Cardiac septum (tissue), 1 donor: ENCODE measurements at regions of chr1 and their contacts with region 1.

Region 1: DNA sequence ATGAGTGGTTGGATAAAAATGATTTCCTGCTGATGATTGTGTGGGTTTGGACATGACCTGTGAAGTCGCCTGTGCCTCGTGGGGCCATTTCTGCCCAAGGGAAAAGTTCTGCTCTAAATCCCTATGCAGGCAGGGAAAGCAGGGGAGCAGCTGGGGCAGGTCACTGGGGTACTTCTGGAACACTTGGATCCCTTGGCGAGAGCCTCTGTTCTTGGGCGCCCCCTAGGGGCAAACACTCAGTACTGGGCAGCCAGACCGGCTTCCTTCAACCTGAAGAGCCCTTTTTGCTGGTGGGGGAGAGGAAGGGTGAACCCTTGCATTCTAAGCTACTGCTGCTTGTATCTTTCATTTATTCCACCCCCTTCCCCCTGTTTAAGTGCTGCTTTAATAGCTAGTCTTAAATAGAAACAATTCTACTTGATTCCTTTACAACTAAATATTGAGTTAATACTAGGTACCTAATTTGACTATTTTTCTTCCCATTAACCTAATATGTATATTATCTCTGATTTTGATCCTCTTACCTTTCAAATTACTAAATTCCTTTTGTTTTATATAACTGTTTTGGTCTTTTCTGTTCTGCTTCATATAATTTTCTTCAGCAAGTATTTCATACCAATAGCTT is 5.1 kb upstream of the CLEC20A start:
- DNase-seq: peak; percentile 86

Region 2: DNA sequence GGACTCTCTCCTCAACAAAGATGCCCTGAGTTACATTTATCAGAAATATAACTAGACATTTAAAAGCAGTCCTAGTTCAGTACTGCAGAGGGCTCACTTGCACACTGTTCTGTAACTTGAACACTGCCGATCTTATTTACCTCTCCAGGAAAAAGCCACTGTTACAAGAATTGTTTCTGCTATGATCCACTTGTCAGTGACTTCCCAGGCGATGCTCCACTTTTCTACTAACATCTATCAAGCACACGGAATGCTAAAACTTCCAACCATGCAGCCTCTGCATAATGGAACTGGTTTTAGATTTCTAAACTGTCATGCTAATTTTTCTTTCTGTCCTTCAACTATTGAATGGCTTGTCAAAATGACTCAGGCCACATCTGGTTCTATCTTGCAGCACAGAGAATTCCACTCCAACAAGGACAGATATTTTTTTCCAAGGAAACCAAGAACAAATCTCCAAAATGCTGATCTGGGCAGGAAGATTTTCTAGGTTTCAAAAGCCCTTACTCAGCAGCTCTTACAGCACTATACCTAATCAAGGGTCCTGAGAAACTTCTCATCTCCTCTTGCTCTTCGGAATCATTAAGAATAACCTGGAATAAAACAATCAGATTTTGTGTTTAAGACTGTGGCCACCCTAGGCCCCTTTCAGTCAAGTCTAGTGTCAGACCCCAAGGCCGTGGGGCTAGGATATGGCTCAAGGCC is 541.9 kb before region 1 on chr1:
- intact Hi-C with region 1: loop called (anchors 5 kb)
- DNase-seq: no peak

Region 3: GRCh38 chr1:178310685-178311105 is 191.1 kb before region 1 on chr1:
- intact Hi-C with region 1: loop called (anchors 2 kb)
- DNase-seq: no peak

Region 4: DNA sequence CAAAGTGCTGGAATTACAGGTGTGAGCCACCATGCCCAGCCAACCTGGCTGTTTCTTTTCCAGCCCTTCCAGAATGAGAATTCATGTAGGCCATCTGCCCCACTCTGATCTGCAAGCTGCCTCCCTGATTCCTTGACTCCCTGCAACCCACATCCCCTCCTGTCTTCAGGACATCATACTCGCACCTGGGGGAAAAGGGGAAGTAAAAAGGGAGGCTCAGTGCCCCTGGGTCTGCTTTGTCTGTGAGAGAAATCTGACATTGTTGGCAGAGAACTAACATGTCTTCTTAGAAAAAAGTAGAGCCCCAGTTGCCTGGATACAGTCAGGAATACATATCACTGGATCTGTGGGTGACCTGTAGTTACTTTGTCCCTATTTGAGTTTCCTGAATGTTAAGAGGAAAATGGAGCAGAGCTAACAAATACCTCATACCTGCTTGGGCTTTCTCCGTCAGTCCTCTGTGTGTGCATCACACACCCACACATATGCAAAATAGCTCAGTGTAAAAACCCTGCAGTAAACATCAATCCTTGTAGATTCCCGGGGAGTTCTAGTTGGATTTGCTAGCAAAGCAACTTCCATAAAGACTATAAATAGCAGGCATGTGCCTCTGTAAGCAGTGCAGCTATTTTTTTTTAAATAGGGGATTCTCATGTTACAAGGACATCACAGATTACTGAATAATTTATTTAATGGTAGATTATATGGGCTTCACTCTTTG is 74.0 kb after region 1 on chr1:
- intact Hi-C with region 1: no loop called
- DNase-seq: no peak